ENCODE measurements at regions of chr3 and their contacts with region 1.

Region 1: DNA sequence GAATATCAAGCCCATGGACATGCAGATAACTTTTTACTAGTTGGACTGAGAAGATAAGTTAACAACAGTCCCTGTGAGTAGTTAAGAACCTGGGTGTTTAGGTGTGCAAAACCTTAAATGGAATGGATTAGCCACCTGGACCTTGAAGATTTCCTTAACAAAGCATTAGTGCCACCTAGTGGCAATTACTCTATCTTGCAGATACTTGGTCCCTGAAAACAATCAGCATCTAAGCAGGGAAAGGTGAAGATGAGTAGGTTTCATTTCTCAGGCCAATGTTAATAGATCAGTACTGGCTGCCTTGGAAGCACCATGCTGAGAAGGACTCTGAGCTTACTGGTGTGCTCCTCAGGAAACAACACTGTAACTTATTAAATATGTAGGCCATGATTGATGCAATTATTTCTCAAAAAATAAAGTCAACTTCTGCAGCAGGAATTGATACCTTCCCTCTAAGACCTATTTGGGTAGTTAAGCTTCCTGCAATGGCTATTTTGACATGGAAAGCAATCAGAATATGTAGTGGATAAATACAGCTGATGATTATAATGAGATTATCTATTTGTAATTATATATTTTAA is 329.4 kb downstream of the TBC1D5 start:
- DNase-seq: peak; percentile 23
- H3K4me3 Mint-ChIP-seq: no peak overlapping the region
- H3K27ac Mint-ChIP-seq: no peak overlapping the region
- H3K4me1 Mint-ChIP-seq: no peaks in the 10 kb centered on the region
- H3K27me3 Mint-ChIP-seq: no peaks in the 10 kb centered on the region

Region 2: DNA sequence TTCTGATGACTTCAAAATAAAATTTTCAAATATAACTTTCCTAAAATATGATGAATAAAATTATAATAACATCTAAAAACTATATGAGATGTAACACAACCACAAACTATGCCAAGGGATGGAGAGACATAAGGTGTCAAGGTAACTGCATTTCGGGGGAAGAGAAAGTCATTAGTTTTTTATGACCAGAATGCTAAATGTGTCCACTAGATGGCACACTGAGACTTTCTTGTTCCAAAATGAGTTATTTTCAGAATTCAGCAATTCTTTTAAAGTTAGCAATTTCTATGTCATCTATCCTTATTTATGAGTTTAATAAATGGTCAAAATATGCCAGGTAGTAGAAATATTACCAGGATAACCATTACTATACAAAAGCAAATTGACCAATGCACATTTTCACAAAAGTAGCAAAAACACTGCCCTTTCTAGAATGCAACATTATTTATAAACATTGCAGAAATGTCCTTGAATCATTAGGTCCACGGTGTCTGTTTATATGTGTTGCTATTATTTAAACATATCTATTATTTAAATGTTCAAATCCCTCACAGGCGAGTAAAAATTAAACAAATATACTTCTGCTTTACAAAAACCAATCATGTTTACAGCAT is 154.1 kb before region 1 on chr3:
- CTCF ChIA-PET with region 1: interaction called, 13 read pairs
- DNase-seq: peak; percentile 25
- H3K4me3 Mint-ChIP-seq: no peak overlapping the region
- H3K27ac Mint-ChIP-seq: no peak overlapping the region
- H3K4me1 Mint-ChIP-seq: no peaks in the 10 kb centered on the region
- H3K27me3 Mint-ChIP-seq: no peaks in the 10 kb centered on the region

Region 3: GRCh38 chr3:17355591-17355990 is 57.4 kb before region 1 on chr3:
- CTCF ChIA-PET with region 1: no interaction called
- DNase-seq: no peak
- H3K4me3 Mint-ChIP-seq: no peak overlapping the region
- H3K27ac Mint-ChIP-seq: no peak overlapping the region
- H3K4me1 Mint-ChIP-seq: no peaks in the 10 kb centered on the region
- H3K27me3 Mint-ChIP-seq: no peaks in the 10 kb centered on the region

Region 4: DNA sequence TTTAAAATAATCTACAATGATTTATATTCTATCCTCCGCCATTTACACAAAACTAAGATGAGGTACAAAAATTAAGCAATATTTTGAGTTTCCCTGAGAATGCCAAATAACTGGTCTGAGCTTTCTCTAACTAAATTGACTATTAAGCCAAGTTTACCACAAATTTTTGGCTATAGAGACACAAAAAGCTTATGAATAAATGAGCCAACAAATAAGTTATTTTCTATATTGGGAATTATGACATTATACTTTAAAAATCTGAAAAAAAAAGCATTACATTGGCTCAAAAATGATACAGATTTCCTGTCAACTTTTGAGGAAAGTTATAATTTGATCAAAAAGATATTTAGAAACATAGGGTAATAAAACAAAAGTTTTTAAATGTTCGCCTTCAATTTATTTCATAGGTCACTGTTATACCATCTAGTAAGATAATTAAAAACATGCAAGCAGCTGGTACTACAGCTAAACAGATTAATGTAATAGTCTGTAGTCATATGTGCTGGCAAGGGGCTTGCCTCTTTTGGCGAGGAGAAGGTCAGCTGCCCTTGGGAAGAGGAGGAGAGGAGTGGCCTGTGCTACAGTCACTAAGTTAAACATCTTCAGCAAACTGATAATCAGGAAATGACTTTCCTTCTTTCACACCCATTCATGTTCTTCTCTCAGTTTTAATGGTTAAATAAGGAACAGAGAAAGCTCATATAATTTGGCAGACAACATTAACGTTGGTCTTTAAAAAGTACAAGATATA is 10.9 kb after region 1 on chr3:
- CTCF ChIA-PET with region 1: interaction called, 13 read pairs
- DNase-seq: no peak
- H3K4me3 Mint-ChIP-seq: no peak overlapping the region
- H3K27ac Mint-ChIP-seq: no peak overlapping the region
- H3K4me1 Mint-ChIP-seq: no peaks in the 10 kb centered on the region
- H3K27me3 Mint-ChIP-seq: no peaks in the 10 kb centered on the region

Measured in activated naive CD4-positive, alpha-beta T cell treated with anti-CD3 and anti-CD28 coated beads, Interleukin-2, amount 10 ng/mL, durations not matched to agents 7 days and 5 days (primary cell).